B cell (primary cell): ENCODE measurements at regions of chr19 and their contacts with region 1.

Region 1: GRCh38 chr19:3343619-3344502 is 22.5 kb upstream of the NFIC start:
- DNase-seq: peak; percentile 48
- ATAC-seq: peak; percentile 57
- H3K4me3 ChIP-seq: no peak overlapping the region
- H3K4me3 Mint-ChIP-seq: no peak overlapping the region
- H3K27ac ChIP-seq: no peak overlapping the region
- H3K27ac Mint-ChIP-seq: no peak overlapping the region
- H3K4me1 ChIP-seq: peaks cover under 1 to 1% of the 10 kb centered on the region in 2 donors
- H3K4me1 Mint-ChIP-seq: peaks cover 2% of the 10 kb centered on the region
- H3K27me3 ChIP-seq: peaks cover 0 to 4% (median 0%) of the 10 kb centered on the region in 4 experiments
- H3K27me3 Mint-ChIP-seq: no peaks in the 10 kb centered on the region
- CTCF ChIP-seq: peak; percentile 26

Region 2: GRCh38 chr19:3398114-3398899 is 54.4 kb after region 1 on chr19:
- CTCF ChIA-PET with region 1: no interaction called
- POLR2A ChIA-PET with region 1: no interaction called
- intact Hi-C with region 1: no loop called
- DNase-seq: no peak
- ATAC-seq: no peak
- H3K4me3 ChIP-seq: no peak overlapping the region
- H3K4me3 Mint-ChIP-seq: no peak overlapping the region
- H3K27ac ChIP-seq: no peak overlapping the region
- H3K27ac Mint-ChIP-seq: no peak overlapping the region
- H3K4me1 ChIP-seq: no peaks in the 10 kb centered on the region
- H3K4me1 Mint-ChIP-seq: no peaks in the 10 kb centered on the region
- H3K27me3 ChIP-seq: no peaks in the 10 kb centered on the region
- H3K27me3 Mint-ChIP-seq: no peaks in the 10 kb centered on the region
- CTCF ChIP-seq: no peak

Region 3: DNA sequence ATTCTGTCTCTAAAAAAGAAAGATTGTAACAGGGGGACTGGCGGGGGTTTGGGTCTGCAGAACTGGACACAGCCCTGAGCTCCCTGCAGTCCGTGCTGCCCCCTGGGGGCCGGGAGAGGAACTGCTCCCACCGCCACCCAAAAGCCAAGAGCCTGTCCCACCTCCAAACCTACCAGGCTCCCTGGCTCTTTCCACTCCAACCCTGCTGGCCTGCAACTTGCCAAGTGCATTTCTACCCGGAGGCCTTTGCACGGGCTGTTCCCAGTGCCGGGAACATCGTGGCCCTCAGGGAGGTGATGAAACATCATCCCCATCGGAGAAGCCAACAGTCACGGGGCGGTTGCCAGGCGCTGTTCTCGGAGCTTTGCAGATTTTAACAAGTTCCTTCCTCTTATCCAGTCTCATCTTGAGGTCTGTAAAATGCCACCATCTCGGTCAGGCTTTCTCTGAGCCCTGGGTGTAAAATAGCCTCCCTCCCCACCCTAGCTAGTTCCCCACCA is 85.8 kb after region 1 on chr19:
- CTCF ChIA-PET with region 1: interaction called, 15 read pairs
- POLR2A ChIA-PET with region 1: no interaction called
- intact Hi-C with region 1: loop called (anchors 1 kb)
- DNase-seq: peak; percentile 82
- ATAC-seq: peak; percentile 82
- H3K4me3 ChIP-seq: no peak overlapping the region
- H3K4me3 Mint-ChIP-seq: no peak overlapping the region
- H3K27ac ChIP-seq: no peak overlapping the region
- H3K27ac Mint-ChIP-seq: no peak overlapping the region
- H3K4me1 ChIP-seq: peaks cover 11 to 22% of the 10 kb centered on the region in 2 donors
- H3K4me1 Mint-ChIP-seq: peaks cover 13% of the 10 kb centered on the region
- H3K27me3 ChIP-seq: no peaks in the 10 kb centered on the region
- H3K27me3 Mint-ChIP-seq: no peaks in the 10 kb centered on the region
- CTCF ChIP-seq: peak; percentile 97

Region 4: DNA sequence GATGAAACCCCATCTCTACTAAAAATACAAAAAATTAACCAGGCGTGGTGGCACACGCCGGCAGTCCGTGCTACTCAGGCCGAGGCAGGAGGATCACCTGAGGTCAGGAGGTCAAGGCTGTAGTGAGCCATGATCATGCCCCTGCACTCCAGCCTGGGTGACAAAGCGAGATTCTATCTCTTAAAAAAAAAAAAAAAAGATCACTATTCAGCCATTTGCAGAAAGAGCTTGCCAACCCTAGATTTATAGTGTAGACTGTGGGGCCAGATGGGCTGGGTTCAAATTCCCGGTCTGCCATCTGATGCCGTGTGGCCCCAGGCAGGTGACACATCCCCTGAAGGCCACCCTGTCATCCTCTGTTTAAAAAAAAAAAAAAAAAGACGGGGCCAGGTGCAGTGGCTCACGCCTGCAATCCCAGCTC is 107.6 kb after region 1 on chr19:
- CTCF ChIA-PET with region 1: no interaction called
- POLR2A ChIA-PET with region 1: interaction called, 11 read pairs
- intact Hi-C with region 1: no loop called
- DNase-seq: no peak
- ATAC-seq: no peak
- H3K4me3 ChIP-seq: no peak overlapping the region
- H3K4me3 Mint-ChIP-seq: no peak overlapping the region
- H3K27ac ChIP-seq: no peak overlapping the region
- H3K27ac Mint-ChIP-seq: no peak overlapping the region
- H3K4me1 ChIP-seq: no peaks in the 10 kb centered on the region
- H3K4me1 Mint-ChIP-seq: no peaks in the 10 kb centered on the region
- H3K27me3 ChIP-seq: no peaks in the 10 kb centered on the region
- H3K27me3 Mint-ChIP-seq: no peaks in the 10 kb centered on the region
- CTCF ChIP-seq: no peak